ENCODE measurements at regions of chr12 and their contacts with region 1.

Region 1: GRCh38 chr12:28497889-28498411 is 307.7 kb downstream of the CCDC91 start:
- DNase-seq: no peak
- H3K4me3 Mint-ChIP-seq: no peak overlapping the region
- H3K27ac Mint-ChIP-seq: no peak overlapping the region
- H3K4me1 Mint-ChIP-seq: peaks cover 14% of the 10 kb centered on the region
- H3K27me3 Mint-ChIP-seq: no peaks in the 10 kb centered on the region

Region 2: DNA sequence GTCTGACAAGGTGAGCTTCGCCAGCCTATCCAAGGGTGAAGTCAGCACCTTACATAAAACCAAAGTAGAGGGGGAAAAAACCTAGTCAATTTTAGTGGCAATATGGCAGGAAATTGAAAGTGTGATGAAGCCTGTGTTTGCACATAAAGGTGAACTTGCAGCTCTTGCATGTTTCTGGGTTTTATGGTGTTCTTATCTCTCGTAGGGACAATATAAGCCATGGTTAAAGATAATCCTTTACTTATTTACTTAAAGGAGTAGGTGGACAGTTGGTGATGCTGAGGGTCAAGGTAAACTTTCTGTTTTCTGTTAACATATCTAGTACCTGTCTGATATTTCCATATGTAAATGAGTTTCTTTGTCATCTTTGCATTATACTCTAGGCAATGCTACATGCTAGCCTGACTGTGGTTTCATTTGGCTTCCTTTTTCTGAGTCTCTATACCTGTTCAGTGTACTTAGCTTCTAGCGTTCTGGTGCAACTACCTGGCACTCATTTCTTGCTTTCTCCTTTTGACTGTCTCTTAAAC is 274.9 kb before region 1 on chr12:
- CTCF ChIA-PET with region 1: no interaction called
- POLR2A ChIA-PET with region 1: no interaction called
- intact Hi-C with region 1: loop called (anchors 1 kb)
- DNase-seq: peak; percentile 16
- H3K4me3 Mint-ChIP-seq: peak overlapping the region; percentile 42
- H3K27ac Mint-ChIP-seq: peak overlapping the region; percentile 76
- H3K4me1 Mint-ChIP-seq: peaks cover 45% of the 10 kb centered on the region
- H3K27me3 Mint-ChIP-seq: no peaks in the 10 kb centered on the region

Region 3: GRCh38 chr12:28369483-28369882 is 128.5 kb before region 1 on chr12:
- CTCF ChIA-PET with region 1: no interaction called
- POLR2A ChIA-PET with region 1: no interaction called
- intact Hi-C with region 1: no loop called
- DNase-seq: no peak
- H3K4me3 Mint-ChIP-seq: no peak overlapping the region
- H3K27ac Mint-ChIP-seq: no peak overlapping the region
- H3K4me1 Mint-ChIP-seq: no peaks in the 10 kb centered on the region
- H3K27me3 Mint-ChIP-seq: no peaks in the 10 kb centered on the region

Region 4: GRCh38 chr12:28460420-28461130 is 37.4 kb before region 1 on chr12:
- CTCF ChIA-PET with region 1: no interaction called
- POLR2A ChIA-PET with region 1: no interaction called
- intact Hi-C with region 1: no loop called
- DNase-seq: no peak
- H3K4me3 Mint-ChIP-seq: no peak overlapping the region
- H3K27ac Mint-ChIP-seq: no peak overlapping the region
- H3K4me1 Mint-ChIP-seq: no peaks in the 10 kb centered on the region
- H3K27me3 Mint-ChIP-seq: no peaks in the 10 kb centered on the region

Region 5: GRCh38 chr12:28550757-28551704 is 53.1 kb after region 1 on chr12:
- CTCF ChIA-PET with region 1: no interaction called
- POLR2A ChIA-PET with region 1: no interaction called
- intact Hi-C with region 1: loop called (anchors 5 kb)
- DNase-seq: no peak
- H3K4me3 Mint-ChIP-seq: no peak overlapping the region
- H3K27ac Mint-ChIP-seq: no peak overlapping the region
- H3K4me1 Mint-ChIP-seq: peaks cover 12% of the 10 kb centered on the region
- H3K27me3 Mint-ChIP-seq: no peaks in the 10 kb centered on the region